Gastrocnemius medialis (tissue), 4 donors: ENCODE measurements at regions of chr11 and their contacts with region 1.

Region 1: DNA sequence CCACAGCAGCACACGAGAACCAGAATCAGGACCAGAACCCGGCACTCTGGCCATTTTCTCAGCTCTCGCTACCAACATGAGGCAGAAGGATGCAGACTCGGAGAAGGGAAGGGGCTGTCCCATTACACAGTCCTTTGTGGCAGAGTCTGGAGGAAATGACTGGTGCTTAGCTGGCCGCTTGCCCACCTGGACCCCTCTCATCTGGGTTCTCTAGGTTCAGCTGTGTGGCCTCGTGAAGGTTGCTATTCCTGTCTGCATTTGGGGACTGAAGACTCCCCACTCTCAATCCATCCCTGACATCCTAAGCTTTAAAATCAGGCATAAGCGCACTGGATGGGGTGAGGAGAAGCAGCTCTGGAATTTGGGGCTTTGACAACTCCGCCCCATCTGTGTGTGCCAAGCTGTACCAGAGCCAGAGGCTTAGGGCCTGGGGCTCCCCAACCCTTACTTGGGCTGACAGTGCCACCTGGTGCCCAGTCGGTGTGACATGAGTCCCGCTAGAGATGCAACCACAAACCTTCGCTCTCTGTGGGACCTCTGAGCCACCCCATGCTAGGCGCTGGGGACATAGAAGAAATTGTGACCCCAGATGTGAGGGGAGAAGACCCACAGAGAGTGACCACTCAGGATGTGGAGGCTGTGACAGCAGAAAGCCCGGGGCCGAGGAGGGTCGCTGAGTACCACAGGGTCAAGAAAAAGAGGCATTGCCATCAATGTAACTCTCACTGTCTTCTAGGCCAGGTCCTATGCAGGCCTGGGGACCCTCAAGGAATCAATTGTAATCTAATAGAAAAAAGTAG is 35.9 kb upstream of the FCHSD2 start:
- DNase-seq: peak; percentile 56 to 72
- ATAC-seq: peak; percentile 64 to 71
- H3K4me3 ChIP-seq: no peak overlapping the region
- H3K27ac ChIP-seq: peak overlapping the region; percentile 29 to 63 (median 46)
- H3K4me1 ChIP-seq: peaks cover 16 to 25% of the 10 kb centered on the region in 2 donors
- H3K27me3 ChIP-seq: no peaks in the 10 kb centered on the region
- CTCF ChIP-seq: peak; percentile 80 to 92 (median 89)
- POLR2A ChIP-seq: no peak

Region 2: DNA sequence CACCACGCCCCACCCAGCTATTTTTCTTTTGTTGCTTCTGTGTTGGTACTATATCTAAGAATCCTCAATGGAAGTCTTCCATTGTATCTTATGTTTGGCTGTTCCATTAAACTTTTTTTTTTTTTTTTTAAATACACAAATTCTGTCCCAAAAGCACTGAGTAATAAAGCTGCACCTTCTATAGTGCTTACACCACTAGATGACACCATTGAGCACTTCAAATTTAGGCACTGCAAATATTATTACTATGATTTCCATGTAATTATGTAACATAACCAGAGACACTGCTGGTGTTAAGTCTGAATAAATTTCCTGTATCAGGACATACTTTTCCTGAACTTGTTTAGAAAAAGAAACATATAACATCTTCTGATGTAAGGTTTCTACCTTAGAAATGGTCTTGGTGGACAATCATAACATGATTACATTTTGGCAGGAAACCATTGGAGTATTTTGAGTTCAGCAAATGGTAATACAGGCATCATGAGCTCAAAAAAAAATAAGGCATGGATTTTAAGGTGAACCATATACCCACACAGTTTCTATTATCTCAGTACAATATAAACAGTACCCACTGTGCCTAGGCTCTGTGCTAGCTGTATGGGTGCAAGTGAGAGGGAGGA is 253.3 kb before region 1 on chr11:
- in situ Hi-C with region 1: loop called in 3 of 4 experiments (anchors 10 kb)
- intact Hi-C with region 1: loop called (anchors 2 kb)
- DNase-seq: no peak
- ATAC-seq: peak; percentile 45 to 75
- H3K4me3 ChIP-seq: no peak overlapping the region
- H3K27ac ChIP-seq: no peak overlapping the region
- H3K4me1 ChIP-seq: peaks cover 4 to 8% of the 10 kb centered on the region in 2 donors
- H3K27me3 ChIP-seq: no peaks in the 10 kb centered on the region
- CTCF ChIP-seq: peak; percentile 25 to 59 (median 38)
- POLR2A ChIP-seq: no peak

Region 3: DNA sequence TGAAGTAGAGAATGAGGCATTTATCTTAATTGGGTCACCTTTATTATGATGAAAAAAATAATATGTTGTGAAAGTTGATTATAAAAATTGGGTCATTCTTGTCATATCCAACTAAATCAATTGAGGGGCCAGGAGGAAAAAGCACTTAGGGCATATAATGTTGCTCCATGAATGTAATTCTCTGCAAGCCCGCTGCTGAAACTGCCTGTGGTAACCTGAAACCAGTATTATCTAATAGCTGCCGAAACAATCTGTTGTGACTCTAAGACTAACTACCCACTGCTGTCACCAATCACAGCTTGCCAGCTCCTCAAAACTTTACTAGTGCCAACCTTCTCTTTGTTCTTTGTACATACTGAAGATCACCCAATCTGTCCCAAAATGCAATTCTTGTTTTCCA is 248.0 kb before region 1 on chr11:
- in situ Hi-C with region 1: loop called (anchors 5 to 10 kb)
- intact Hi-C with region 1: no loop called
- DNase-seq: no peak
- ATAC-seq: peak in 1 of 2 donors; percentile 44
- H3K4me3 ChIP-seq: no peak overlapping the region
- H3K27ac ChIP-seq: no peak overlapping the region
- H3K4me1 ChIP-seq: peaks cover 5% of the 10 kb centered on the region in 2 donors
- H3K27me3 ChIP-seq: no peaks in the 10 kb centered on the region
- CTCF ChIP-seq: no peak
- POLR2A ChIP-seq: no peak